ENCODE measurements at regions of chr4 and their contacts with region 1.

Region 1: GRCh38 chr4:83074086-83074704 is 39.2 kb downstream of the COPS4 start:
- DNase-seq: no peak
- ATAC-seq: peak; percentile 90
- H3K4me3 ChIP-seq: no peak overlapping the region
- H3K27ac ChIP-seq: no peak overlapping the region
- H3K4me1 ChIP-seq: peaks cover 4% of the 10 kb centered on the region
- H3K27me3 ChIP-seq: no peaks in the 10 kb centered on the region
- CTCF ChIP-seq: peak; percentile 72

Region 2: DNA sequence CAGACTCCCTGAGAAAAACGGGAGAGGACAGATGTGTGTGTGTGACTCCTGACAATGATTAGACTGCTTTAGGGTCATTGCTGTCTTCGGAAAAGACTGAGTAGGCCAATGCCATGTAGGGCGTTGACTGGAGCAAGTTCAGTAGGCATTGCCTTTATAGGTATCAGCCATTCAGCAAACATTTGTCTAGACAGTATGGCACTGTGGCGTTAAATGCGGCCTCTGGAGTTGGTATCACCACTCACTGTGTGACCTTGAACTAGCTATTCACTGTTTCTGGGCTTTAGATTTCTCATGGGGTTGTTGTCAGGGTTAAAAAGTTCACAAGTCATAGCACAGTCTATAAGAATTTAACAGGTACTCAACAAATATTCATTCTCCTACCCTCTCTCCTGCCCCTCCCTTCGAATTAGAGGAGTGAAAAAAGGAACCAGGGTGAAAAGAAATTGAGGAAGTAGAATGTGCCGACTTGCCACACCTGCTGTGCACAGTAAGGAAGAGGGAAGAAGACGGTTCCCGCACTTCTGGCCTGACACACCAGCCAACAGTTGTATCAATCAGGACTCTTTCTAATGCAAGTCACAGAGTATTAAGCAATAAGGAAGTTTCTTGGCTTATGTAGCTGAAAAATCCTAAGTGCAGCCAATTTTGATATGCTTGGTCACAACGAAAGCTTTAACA is 123.5 kb after region 1 on chr4:
- intact Hi-C with region 1: no loop called
- DNase-seq: no peak
- ATAC-seq: peak; percentile 89
- H3K4me3 ChIP-seq: no peak overlapping the region
- H3K27ac ChIP-seq: no peak overlapping the region
- H3K4me1 ChIP-seq: no peaks in the 10 kb centered on the region
- H3K27me3 ChIP-seq: no peaks in the 10 kb centered on the region
- CTCF ChIP-seq: no peak

Region 3: DNA sequence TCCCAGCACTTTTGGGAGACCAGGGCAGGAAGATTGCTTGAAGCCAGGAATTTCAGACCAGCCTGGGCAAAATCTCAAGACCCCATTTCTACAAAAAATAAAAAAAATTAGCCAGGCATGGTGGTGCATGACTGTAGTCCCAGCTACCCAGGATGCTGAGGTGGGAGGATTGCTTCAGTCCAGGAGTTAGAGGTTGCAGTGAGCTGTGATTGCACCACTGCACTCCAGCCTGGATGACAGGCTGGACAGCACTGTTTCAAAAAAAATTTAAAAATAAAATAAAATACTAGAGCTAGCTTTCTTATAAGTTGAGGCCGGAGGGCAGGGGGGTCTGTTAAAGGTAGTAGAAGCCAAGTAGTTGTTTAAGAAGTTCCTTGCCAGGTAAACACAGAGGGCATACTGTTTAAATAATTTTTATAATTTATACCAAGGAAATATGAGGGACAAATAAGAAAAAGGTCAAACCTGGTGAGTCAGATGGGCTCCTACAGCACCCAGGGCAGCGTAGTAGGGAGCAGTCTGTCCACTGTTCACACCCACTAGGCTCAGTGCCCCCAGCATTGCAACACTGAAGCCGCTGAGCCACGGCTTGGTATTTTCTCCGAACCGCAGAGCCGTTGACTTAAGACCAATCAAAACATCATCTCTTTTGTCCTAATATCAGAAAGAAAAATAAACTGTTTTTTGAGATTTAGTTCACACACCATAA is 193.1 kb after region 1 on chr4:
- intact Hi-C with region 1: loop called (anchors 10 kb)
- DNase-seq: no peak
- ATAC-seq: peak; percentile 61
- H3K4me3 ChIP-seq: no peak overlapping the region
- H3K27ac ChIP-seq: no peak overlapping the region
- H3K4me1 ChIP-seq: no peaks in the 10 kb centered on the region
- H3K27me3 ChIP-seq: no peaks in the 10 kb centered on the region
- CTCF ChIP-seq: no peak

Measured in upper lobe of right lung (tissue), 1 donor.